ENCODE measurements at regions of chr9 and their contacts with region 1.

Region 1: GRCh38 chr9:122810306-122810946 is 10.5 kb downstream of the OR1K1 start:
- DNase-seq: peak; percentile 82
- H3K4me3 ChIP-seq: no peak overlapping the region
- H3K27ac ChIP-seq: no peak overlapping the region
- H3K4me1 ChIP-seq: peaks cover 0 to 5% (median 0%) of the 10 kb centered on the region in 4 donors
- H3K27me3 ChIP-seq: no peaks in the 10 kb centered on the region
- CTCF ChIP-seq: peak; percentile 67 to 84 (median 71)
- EP300 ChIP-seq: no peak
- POLR2A ChIP-seq: no peak

Region 2: GRCh38 chr9:122464633-122465567 is 345.5 kb before region 1 on chr9:
- intact Hi-C with region 1: loop called (anchors 1 kb)
- DNase-seq: peak; percentile 91
- H3K4me3 ChIP-seq: peak overlapping the region; percentile 25 to 43 (median 42)
- H3K27ac ChIP-seq: peak overlapping the region in 3 of 4 donors; percentile 60 to 63 (median 62)
- H3K4me1 ChIP-seq: peaks cover 0 to 16% (median 14%) of the 10 kb centered on the region in 4 donors
- H3K27me3 ChIP-seq: no peaks in the 10 kb centered on the region
- CTCF ChIP-seq: peak; percentile 71 to 85 (median 80)
- EP300 ChIP-seq: no peak
- POLR2A ChIP-seq: no peak

Region 3: GRCh38 chr9:122900791-122901190 is 90.4 kb after region 1 on chr9:
- intact Hi-C with region 1: no loop called
- DNase-seq: no peak
- H3K4me3 ChIP-seq: peak overlapping the region in 1 of 4 donors; percentile 0
- H3K27ac ChIP-seq: peak overlapping the region in 2 of 4 donors; percentile 8 to 41
- H3K4me1 ChIP-seq: peaks cover 0 to 71% (median 48%) of the 10 kb centered on the region in 4 donors
- H3K27me3 ChIP-seq: no peaks in the 10 kb centered on the region
- CTCF ChIP-seq: no peak
- EP300 ChIP-seq: no peak
- POLR2A ChIP-seq: no peak

Measured in sigmoid colon (tissue), 7 donors.